ENCODE measurements at regions of chr17 and their contacts with region 1.

Region 1: DNA sequence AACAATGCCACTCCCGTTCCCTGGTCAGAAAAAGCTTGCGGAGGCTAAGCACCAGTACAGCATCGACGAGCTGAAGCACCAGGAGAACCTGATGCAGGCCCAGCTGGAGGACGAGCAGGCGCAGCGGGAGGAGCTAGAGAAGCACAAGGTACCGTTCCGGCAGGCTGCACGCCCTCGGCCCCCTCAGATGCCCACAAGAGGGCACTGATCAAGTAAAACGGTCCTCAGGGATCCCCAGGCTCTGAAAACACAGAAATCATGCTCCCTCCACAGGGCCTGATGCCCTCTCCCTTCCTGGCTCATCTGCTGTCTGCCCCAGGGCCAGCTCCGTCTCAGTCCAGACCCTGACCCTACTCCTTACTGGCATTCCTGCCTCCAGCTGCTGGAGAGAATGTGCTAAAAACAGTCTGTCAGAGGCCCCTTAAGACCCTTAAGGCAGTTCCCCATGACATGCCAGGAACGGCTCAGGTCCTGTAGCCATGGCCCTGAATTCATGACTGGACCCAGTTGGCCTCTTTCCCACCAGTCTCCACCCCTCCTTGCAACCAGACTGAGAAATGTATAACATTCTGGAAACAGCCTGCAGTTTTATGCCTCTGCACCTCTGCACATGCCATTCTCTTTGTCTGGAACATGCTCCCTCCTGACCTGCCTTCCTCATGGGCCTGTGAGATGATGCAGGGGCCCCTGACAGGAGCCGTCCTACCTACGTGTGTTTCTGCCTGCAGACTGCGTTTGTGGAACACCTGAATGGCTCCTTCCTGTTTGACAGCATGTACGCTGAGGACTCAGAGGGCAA is 21.8 kb downstream of the DRC3 start:
- DNase-seq: no peak
- H3K4me3 ChIP-seq: no peak overlapping the region
- CTCF ChIP-seq: peak; percentile 50

Region 2: GRCh38 chr17:17836250-17836817 is 158.1 kb before region 1 on chr17:
- CTCF ChIA-PET with region 1: no interaction called
- POLR2A ChIA-PET with region 1: no interaction called
- DNase-seq: peak; percentile 46
- H3K4me3 ChIP-seq: peak overlapping the region; percentile 93
- CTCF ChIP-seq: no peak

Region 3: DNA sequence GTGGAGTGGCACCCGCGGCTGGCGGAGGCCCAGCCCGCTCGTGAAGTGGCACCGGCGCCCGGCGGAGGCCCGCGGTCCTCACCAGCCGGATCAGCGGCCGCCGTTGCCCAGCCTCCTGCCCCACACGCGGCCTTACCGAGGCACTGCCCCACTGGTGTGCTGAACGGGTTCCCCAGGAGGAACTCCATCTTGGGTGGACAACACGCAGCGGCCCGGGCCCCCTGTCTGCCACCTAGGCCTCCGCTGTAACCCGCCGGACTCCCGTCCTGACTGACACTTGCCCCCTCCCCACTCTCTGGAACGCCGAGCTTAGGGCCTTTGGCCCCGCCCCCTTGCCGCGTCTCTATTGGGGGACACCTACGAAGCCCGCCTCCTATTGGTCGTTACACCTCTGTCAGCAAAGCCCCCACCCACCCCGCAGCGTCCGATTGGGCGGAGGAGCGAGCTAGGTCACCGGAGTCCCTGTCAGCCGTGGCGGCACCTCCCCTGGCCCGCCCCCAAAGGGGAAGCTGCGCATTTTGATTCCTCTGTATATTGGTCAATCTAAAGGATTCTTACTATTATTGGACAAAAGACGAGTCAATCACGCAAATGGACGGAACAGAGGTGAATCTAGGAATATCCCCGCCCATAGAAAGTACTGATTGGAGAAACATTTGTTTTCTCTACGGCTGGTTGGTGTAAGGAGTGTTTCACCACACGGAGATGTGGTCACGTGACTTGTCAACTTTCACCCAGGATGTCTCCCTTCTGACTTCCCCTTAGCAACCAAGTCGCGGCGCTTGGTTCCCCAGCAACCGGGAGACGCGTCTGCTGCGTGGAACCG is 22.1 kb before region 1 on chr17 and contains the starts of genes DRC3 and TOM1L2:
- CTCF ChIA-PET with region 1: interaction called, 13 read pairs
- POLR2A ChIA-PET with region 1: no interaction called
- DNase-seq: peak; percentile 100
- H3K4me3 ChIP-seq: peak within 1 kb of the TSS; percentile 85
- CTCF ChIP-seq: no peak

Region 4: GRCh38 chr17:18087610-18088491 is 93.4 kb after region 1 on chr17 and contains the start of gene DRG2:
- CTCF ChIA-PET with region 1: no interaction called
- POLR2A ChIA-PET with region 1: no interaction called
- DNase-seq: peak; percentile 40
- H3K4me3 ChIP-seq: peak within 1 kb of the TSS; percentile 96
- CTCF ChIP-seq: peak; percentile 29

Measured in AG04449 (cell line).